Calu3 (cell line): ENCODE measurements at regions of chr3 and their contacts with region 1.

Region 1: DNA sequence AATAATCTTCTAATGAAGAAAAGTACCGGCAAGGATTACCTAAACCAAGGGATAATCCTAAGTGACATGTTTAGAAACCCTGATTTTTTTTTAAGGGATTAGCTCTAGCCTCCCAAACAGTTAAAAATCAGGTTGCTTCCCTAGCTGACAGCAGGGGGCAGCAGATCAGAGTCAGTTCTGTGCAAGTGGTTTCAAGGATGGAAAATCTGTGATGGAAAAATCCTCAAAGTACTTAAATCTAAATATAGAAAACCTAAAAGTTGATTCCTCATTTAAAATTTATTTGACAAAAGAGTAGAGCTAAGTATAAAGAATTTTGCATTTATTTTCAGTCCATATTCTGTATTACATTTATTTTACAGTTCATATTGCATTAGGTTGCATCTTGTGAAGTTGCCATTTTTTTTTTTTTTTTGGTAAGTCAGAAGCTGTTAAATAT is 107.6 kb downstream of the PEX5L start:
- DNase-seq: peak; percentile 83
- H3K4me3 Mint-ChIP-seq: no peak overlapping the region
- H3K27ac Mint-ChIP-seq: no peak overlapping the region
- H3K4me1 Mint-ChIP-seq: peaks cover 8% of the 10 kb centered on the region
- H3K27me3 Mint-ChIP-seq: no peaks in the 10 kb centered on the region
- CTCF ChIP-seq: peak; percentile 92

Region 2: DNA sequence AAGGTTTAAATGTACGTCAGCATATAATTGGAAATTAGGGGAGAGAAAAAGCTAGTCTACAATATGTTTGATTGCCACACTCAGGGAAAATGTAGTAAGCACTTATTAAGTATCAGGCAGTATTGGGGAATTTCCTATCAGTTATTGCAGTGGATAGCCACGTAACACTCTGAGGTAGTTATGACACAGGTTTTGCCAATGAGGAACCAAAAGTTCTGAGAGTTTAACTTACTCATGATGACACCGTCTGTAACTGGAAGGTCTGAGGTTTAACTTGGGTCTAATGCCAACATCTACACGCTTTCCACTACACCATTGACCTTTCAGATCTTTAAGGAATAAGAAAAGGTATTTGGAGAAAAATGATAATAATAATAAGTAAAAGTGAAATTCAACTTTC is 947.0 kb before region 1 on chr3:
- CTCF ChIA-PET with region 1: no interaction called
- intact Hi-C with region 1: no loop called
- DNase-seq: no peak
- H3K4me3 Mint-ChIP-seq: no peak overlapping the region
- H3K27ac Mint-ChIP-seq: no peak overlapping the region
- H3K4me1 Mint-ChIP-seq: no peaks in the 10 kb centered on the region
- H3K27me3 Mint-ChIP-seq: no peaks in the 10 kb centered on the region
- CTCF ChIP-seq: no peak

Region 3: GRCh38 chr3:179421500-179421899 is 507.6 kb before region 1 on chr3:
- CTCF ChIA-PET with region 1: no interaction called
- intact Hi-C with region 1: no loop called
- DNase-seq: no peak
- H3K4me3 Mint-ChIP-seq: no peak overlapping the region
- H3K27ac Mint-ChIP-seq: no peak overlapping the region
- H3K4me1 Mint-ChIP-seq: no peaks in the 10 kb centered on the region
- H3K27me3 Mint-ChIP-seq: no peaks in the 10 kb centered on the region
- CTCF ChIP-seq: no peak

Region 4: GRCh38 chr3:180085122-180085710 is 156.1 kb after region 1 on chr3:
- CTCF ChIA-PET with region 1: no interaction called
- intact Hi-C with region 1: loop called (anchors 1 kb)
- DNase-seq: no peak
- H3K4me3 Mint-ChIP-seq: no peak overlapping the region
- H3K27ac Mint-ChIP-seq: no peak overlapping the region
- H3K4me1 Mint-ChIP-seq: no peaks in the 10 kb centered on the region
- H3K27me3 Mint-ChIP-seq: no peaks in the 10 kb centered on the region
- CTCF ChIP-seq: no peak

Region 5: GRCh38 chr3:180278583-180279188 is 349.6 kb after region 1 on chr3:
- CTCF ChIA-PET with region 1: no interaction called
- intact Hi-C with region 1: loop called (anchors 10 kb)
- DNase-seq: no peak
- H3K4me3 Mint-ChIP-seq: no peak overlapping the region
- H3K27ac Mint-ChIP-seq: peak overlapping the region; percentile 2
- H3K4me1 Mint-ChIP-seq: peaks cover 41% of the 10 kb centered on the region
- H3K27me3 Mint-ChIP-seq: no peaks in the 10 kb centered on the region
- CTCF ChIP-seq: no peak

Region 6: GRCh38 chr3:180408654-180409053 is 479.5 kb after region 1 on chr3:
- CTCF ChIA-PET with region 1: no interaction called
- intact Hi-C with region 1: loop called (anchors 10 kb)
- DNase-seq: peak; percentile 70
- H3K4me3 Mint-ChIP-seq: no peak overlapping the region
- H3K27ac Mint-ChIP-seq: peak overlapping the region; percentile 83
- H3K4me1 Mint-ChIP-seq: peaks cover 62% of the 10 kb centered on the region
- H3K27me3 Mint-ChIP-seq: no peaks in the 10 kb centered on the region
- CTCF ChIP-seq: no peak